ENCODE measurements at regions of chr11 and their contacts with region 1.

Region 1: GRCh38 chr11:61679893-61680621 is at the start of gene DAGLA:
- DNase-seq: peak; percentile 66 to 81
- H3K4me3 ChIP-seq: peak within 1 kb of the TSS; percentile 51 to 76 (median 60)
- H3K27ac ChIP-seq: peak within 1 kb of the TSS; percentile 65 to 79
- H3K4me1 ChIP-seq: no peaks in the 10 kb centered on the region
- H3K27me3 ChIP-seq: no peaks in the 10 kb centered on the region
- CTCF ChIP-seq: peak; percentile 69 to 98 (median 90)
- POLR2A ChIP-seq: no peak
- total RNA-seq, gene DAGLA: 2.4 to 4.5 (median 3.3) TPM

Region 2: GRCh38 chr11:61733120-61733978 is 53.3 kb after region 1 on chr11:
- intact Hi-C with region 1: loop called (anchors 10 kb)
- DNase-seq: peak; percentile 82 to 87
- H3K4me3 ChIP-seq: no peak overlapping the region
- H3K27ac ChIP-seq: peak overlapping the region; percentile 53 to 62
- H3K4me1 ChIP-seq: peaks cover 0 to 11% of the 10 kb centered on the region in 2 donors
- H3K27me3 ChIP-seq: no peaks in the 10 kb centered on the region
- CTCF ChIP-seq: peak; percentile 91 to 99 (median 99)
- POLR2A ChIP-seq: no peak